ENCODE measurements at regions of chr17 and their contacts with region 1.

Region 1: DNA sequence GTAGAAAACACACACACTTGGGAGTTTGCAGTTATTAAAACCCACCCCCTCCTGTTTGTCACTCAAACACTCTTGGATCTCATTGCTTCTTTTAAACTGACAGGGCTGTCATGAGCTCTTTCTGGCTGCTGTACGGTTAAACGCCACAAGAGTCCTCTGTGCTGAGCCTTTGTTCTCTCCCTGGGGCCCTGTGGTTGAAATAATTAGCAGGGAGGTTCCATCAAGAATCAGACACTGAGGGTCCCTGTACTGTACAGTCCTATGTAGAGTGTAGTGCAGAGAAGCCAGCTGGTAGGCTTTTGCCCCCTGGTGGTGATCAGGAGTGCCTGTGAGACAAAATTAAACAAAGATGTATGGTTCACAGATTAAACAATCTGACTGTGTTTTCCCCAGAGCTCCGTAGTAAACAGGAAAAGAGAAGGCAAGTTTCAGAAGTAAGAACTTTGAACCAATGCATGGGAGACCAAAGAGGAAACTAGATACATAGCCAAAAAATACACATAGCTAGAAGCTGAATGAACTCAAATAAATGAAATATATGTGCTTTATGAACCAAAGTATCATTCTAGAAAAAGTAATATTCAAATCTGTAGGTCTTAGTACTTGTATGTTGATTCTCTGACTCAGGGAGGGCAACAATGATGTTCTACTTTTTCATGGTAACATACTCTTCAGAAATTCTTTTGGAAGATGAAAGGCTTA is 1.4 kb upstream of the SSH2 start:
- DNase-seq: peak; percentile 92
- ATAC-seq: peak; percentile 71
- H3K4me3 ChIP-seq: peak overlapping the region; percentile 77 to 94 (median 86)
- H3K4me3 Mint-ChIP-seq: no peak overlapping the region
- H3K27ac ChIP-seq: peak overlapping the region; percentile 28 to 86
- H3K27ac Mint-ChIP-seq: no peak overlapping the region
- H3K4me1 ChIP-seq: peaks cover 26 to 30% of the 10 kb centered on the region in 2 donors
- H3K4me1 Mint-ChIP-seq: peaks cover 34% of the 10 kb centered on the region
- H3K27me3 ChIP-seq: no peaks in the 10 kb centered on the region
- H3K27me3 Mint-ChIP-seq: no peaks in the 10 kb centered on the region
- CTCF ChIP-seq: peak; percentile 91

Region 2: GRCh38 chr17:29293890-29294579 is 637.3 kb before region 1 on chr17 and contains the start of gene NUFIP2:
- CTCF ChIA-PET with region 1: no interaction called
- POLR2A ChIA-PET with region 1: no interaction called
- intact Hi-C with region 1: loop called (anchors 2 kb)
- DNase-seq: peak; percentile 99
- ATAC-seq: peak; percentile 84
- H3K4me3 ChIP-seq: peak within 1 kb of the TSS; percentile 89 to 95 (median 91)
- H3K4me3 Mint-ChIP-seq: peak within 1 kb of the TSS; percentile 97
- H3K27ac ChIP-seq: peak within 1 kb of the TSS; percentile 82 to 94
- H3K27ac Mint-ChIP-seq: peak within 1 kb of the TSS; percentile 97
- H3K4me1 ChIP-seq: peaks cover 30 to 34% of the 10 kb centered on the region in 2 donors
- H3K4me1 Mint-ChIP-seq: peaks cover 30% of the 10 kb centered on the region
- H3K27me3 ChIP-seq: no peaks in the 10 kb centered on the region
- H3K27me3 Mint-ChIP-seq: no peaks in the 10 kb centered on the region
- CTCF ChIP-seq: no peak
- total RNA-seq, gene NUFIP2: 76.5 and 83.5 TPM in 2 replicates

Region 3: GRCh38 chr17:29617125-29617480 is 314.3 kb before region 1 on chr17:
- CTCF ChIA-PET with region 1: interaction called, 22 read pairs
- POLR2A ChIA-PET with region 1: interaction called, 12 read pairs
- intact Hi-C with region 1: loop called (anchors 1 kb)
- DNase-seq: peak; percentile 90
- ATAC-seq: peak; percentile 71
- H3K4me3 ChIP-seq: peak overlapping the region in 4 of 5 experiments; percentile 37 to 73 (median 53)
- H3K4me3 Mint-ChIP-seq: peak overlapping the region; percentile 90
- H3K27ac ChIP-seq: no peak overlapping the region
- H3K27ac Mint-ChIP-seq: peak overlapping the region; percentile 64
- H3K4me1 ChIP-seq: peaks cover 56 to 61% of the 10 kb centered on the region in 2 donors
- H3K4me1 Mint-ChIP-seq: peaks cover 47% of the 10 kb centered on the region
- H3K27me3 ChIP-seq: peaks cover 0 to 40% (median 12%) of the 10 kb centered on the region in 4 experiments
- H3K27me3 Mint-ChIP-seq: peaks cover 5% of the 10 kb centered on the region
- CTCF ChIP-seq: peak; percentile 76

Region 4: DNA sequence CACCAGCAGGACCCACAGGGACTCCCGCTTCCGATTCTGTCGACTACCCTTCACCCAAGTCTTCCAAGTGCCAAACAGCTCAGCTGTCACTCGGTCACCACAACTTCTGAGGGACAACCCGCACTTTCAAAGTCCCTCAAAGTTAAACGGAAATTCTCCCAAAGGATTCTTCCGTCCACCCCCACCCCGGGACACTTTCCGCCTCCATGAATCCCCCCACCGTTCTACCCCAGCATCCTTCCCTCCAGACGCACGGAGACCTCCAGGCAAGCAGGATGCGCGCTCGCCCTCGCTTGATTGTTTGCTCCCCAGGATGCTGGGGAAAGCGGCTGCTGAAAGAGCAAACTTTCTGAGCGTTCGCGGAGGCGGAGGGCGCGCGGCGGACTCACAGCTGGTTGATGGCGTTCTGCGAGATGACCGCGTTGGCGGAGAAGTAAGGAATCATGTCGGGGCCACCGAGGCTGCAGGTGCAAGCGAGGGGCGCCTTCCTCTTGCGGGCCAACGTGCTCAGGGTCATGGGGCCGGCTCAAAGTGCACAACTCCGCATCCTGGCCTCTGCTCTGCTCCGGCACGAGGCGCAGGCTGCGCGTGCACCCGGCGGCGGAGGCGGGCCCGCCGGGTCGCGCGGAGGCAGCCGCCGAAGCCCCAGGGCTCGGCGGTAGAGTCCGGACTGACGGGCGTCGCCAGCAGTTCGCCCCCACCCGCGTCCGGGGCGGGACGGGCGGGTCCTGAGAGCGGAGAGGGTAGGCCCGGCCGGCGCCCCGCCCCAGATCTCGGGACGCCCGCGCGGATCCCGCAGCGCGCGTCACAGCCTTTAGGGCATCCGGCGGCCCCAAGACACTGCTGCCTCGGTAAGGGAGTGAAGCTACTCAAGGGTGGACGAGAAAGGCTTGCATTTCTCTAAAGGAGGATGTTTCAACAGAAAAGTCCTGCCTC is 170.4 kb before region 1 on chr17:
- CTCF ChIA-PET with region 1: interaction called, 5 read pairs
- POLR2A ChIA-PET with region 1: interaction called, 18 read pairs
- intact Hi-C with region 1: loop called (anchors 2 kb)
- DNase-seq: peak; percentile 97
- ATAC-seq: peak; percentile 87
- H3K4me3 ChIP-seq: peak overlapping the region; percentile 83 to 96 (median 94)
- H3K4me3 Mint-ChIP-seq: peak overlapping the region; percentile 90
- H3K27ac ChIP-seq: peak overlapping the region; percentile 80 to 83
- H3K27ac Mint-ChIP-seq: peak overlapping the region; percentile 90
- H3K4me1 ChIP-seq: peaks cover 34 to 41% of the 10 kb centered on the region in 2 donors
- H3K4me1 Mint-ChIP-seq: peaks cover 38% of the 10 kb centered on the region
- H3K27me3 ChIP-seq: no peaks in the 10 kb centered on the region
- H3K27me3 Mint-ChIP-seq: no peaks in the 10 kb centered on the region
- CTCF ChIP-seq: no peak

Region 5: GRCh38 chr17:29821897-29822296 is 109.5 kb before region 1 on chr17:
- CTCF ChIA-PET with region 1: interaction called, 14 read pairs
- POLR2A ChIA-PET with region 1: interaction called, 3 read pairs
- intact Hi-C with region 1: no loop called
- DNase-seq: no peak
- ATAC-seq: no peak
- H3K4me3 ChIP-seq: no peak overlapping the region
- H3K4me3 Mint-ChIP-seq: no peak overlapping the region
- H3K27ac ChIP-seq: no peak overlapping the region
- H3K27ac Mint-ChIP-seq: no peak overlapping the region
- H3K4me1 ChIP-seq: no peaks in the 10 kb centered on the region
- H3K4me1 Mint-ChIP-seq: no peaks in the 10 kb centered on the region
- H3K27me3 ChIP-seq: no peaks in the 10 kb centered on the region
- H3K27me3 Mint-ChIP-seq: no peaks in the 10 kb centered on the region
- CTCF ChIP-seq: no peak

Region 6: GRCh38 chr17:29918922-29919856 is 12.2 kb before region 1 on chr17:
- CTCF ChIA-PET with region 1: interaction called, 29 read pairs
- POLR2A ChIA-PET with region 1: no interaction called
- intact Hi-C with region 1: no loop called
- DNase-seq: no peak
- ATAC-seq: no peak
- H3K4me3 ChIP-seq: no peak overlapping the region
- H3K4me3 Mint-ChIP-seq: no peak overlapping the region
- H3K27ac ChIP-seq: no peak overlapping the region
- H3K27ac Mint-ChIP-seq: no peak overlapping the region
- H3K4me1 ChIP-seq: peaks cover 0 to 3% of the 10 kb centered on the region in 2 donors
- H3K4me1 Mint-ChIP-seq: peaks cover 33% of the 10 kb centered on the region
- H3K27me3 ChIP-seq: no peaks in the 10 kb centered on the region
- H3K27me3 Mint-ChIP-seq: no peaks in the 10 kb centered on the region
- CTCF ChIP-seq: no peak

Region 7: DNA sequence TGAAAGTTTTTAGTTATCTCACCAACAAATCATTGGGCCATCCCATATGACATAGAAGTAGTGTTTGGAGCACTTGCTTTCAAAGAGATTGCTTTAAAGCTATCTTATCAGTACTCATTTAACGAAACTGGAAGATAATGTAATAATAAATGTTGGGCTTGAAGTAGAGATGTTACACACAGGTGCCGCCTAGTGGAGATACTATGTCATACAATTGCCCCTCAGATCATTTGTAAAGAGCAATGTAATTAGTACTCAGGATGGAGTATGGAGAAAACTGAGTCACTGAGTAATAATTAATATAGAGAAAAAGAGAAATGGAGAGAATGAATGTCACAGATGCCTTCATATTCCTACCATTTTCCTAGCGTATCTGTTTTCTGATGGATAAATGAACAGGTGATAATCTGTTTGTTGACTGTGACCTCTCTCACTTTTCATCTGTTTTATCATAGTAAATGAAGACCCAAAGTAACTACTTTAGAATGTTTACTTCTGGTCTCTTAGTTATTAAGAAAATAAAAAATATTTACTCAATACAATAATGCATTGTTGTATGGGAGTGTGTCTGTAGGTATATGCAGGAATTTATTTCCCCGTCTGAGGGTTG is 90.4 kb after region 1 on chr17:
- CTCF ChIA-PET with region 1: interaction called, 22 read pairs
- POLR2A ChIA-PET with region 1: interaction called, 3 read pairs
- intact Hi-C with region 1: loop called (anchors 1 kb)
- DNase-seq: peak; percentile 69
- ATAC-seq: peak; percentile 75
- H3K4me3 ChIP-seq: no peak overlapping the region
- H3K4me3 Mint-ChIP-seq: no peak overlapping the region
- H3K27ac ChIP-seq: no peak overlapping the region
- H3K27ac Mint-ChIP-seq: no peak overlapping the region
- H3K4me1 ChIP-seq: no peaks in the 10 kb centered on the region
- H3K4me1 Mint-ChIP-seq: peaks cover 1% of the 10 kb centered on the region
- H3K27me3 ChIP-seq: no peaks in the 10 kb centered on the region
- H3K27me3 Mint-ChIP-seq: peaks cover 3% of the 10 kb centered on the region
- CTCF ChIP-seq: peak; percentile 91

Measured in B cell (primary cell).